ENCODE measurements at regions of chr5 and their contacts with region 1.

Region 1: DNA sequence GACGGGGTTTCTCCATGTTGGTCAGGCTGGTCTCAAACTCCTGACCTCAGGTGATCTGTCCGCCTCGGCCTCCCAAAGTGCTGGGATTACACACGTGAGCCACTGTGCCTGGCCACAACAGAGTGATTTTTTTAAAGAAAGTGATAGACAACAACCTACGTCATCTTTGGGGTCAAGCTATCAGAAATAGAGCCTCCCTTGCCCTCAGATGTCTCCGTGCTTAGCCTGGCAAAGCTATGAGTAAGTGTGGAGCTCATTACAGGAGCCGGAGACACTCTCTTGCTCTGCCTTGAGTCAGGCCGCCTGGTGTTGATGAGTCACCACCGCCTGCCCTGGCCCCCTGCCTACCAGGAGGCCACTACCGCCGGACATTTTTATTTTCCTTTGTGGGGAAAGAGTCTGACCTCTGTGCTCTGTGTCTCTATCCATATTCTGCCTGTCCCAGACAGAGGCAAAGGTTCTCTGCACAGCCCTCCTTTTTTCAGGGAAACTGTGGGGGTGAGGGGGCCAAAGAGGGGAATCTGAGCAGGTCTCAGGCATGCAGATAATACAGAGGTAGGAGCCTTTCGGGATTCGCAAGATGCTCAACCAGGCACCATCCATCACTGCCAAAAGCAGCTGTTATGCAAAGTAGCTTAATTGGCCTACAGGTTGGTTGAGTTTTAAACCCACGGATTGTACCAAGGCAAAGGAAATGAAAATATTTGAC is 123.7 kb upstream of the CPEB4 start:
- DNase-seq: peak; percentile 88

Region 2: DNA sequence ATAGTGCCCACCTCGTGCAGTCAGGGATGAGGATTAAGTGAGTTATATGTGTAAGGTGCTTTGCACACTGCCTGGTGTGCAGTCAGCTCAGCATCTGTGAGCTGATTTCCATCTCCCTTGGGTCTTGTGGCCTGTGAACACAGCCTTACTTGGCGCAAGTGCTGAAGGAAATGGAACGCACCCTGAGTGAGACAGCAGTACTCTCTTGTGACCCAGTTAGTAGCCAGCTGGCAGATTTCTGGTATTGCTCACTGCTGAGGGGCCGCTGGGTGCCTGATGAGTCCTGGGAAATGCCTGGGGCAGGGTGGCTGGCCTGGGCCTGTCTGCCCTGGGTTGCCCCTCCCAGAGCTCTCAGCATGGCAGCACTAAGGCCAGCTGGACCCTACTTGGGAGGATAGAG is 57.1 kb before region 1 on chr5:
- intact Hi-C with region 1: loop called (anchors 5 kb)
- DNase-seq: no peak

Region 3: DNA sequence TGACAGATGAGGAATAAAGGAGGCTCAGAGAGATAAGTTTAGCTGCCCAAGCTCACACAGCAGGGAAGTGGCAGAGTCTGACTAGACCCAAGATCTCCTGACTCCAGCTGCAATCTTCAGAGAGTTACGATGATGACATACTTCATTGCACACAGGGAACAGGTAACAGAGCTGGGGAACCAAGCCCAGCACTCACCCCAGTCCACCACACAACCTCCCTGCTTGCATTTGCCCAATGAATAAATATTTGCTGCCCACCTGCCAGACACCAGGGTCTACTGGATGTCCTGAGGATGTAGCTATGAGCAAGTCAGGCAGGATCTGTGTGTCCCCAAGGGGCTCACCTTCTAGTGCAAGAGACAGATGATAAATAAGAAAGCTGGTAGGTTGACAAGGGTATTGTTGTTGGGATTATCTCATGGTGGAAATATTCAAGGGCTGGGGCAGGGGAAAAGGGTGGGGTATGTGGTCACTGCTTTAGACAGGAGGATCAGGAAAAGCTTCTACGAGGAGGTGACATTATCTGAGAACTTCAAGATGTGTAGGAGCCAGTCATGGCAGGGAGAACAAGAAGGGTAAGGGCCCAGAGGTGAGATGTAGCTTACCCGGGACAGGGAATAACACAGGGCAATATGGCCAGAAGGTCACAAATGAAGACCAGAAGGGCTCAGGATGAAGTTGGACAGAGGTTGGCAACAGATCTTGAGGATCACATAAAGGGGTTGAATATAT is 95.1 kb after region 1 on chr5:
- intact Hi-C with region 1: loop called (anchors 5 kb)
- DNase-seq: no peak

Region 4: DNA sequence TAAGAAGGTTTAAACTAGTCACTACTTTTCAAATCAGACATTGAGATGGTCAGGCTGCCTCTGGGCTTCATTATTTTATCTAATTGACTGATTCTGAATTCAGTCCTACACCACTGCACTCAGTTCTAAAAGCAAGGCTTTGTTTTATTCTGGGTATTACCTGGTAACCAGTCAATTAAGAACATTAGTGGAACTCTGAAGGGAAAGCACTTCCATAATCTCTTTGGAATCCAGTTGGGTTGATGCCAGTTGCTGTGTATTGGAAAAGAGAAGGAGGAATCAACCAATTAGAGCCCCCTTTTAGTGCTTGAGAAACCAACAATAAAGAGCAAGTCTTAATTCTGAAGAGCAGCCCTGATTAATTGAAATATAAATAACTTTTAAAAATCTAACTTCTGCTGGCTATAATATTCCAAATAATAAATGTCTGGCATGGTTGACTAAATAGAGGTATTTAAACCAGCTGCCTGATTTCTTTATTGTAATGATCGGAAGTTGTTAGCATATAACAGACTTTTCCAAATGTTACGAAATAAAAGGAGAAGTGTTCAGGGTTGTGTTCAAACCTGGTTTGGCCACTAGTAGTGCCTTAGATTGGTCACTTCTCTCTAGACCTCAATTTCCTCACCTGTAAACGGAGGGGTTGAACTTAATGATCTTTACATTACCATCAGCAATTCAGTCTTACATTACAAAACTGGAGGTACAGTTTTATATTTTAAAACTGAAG is 155.7 kb after region 1 on chr5:
- intact Hi-C with region 1: loop called (anchors 5 kb)
- DNase-seq: no peak

Region 5: GRCh38 chr5:173941758-173942401 is 177.4 kb after region 1 on chr5:
- intact Hi-C with region 1: no loop called
- DNase-seq: no peak

Region 6: GRCh38 chr5:174520420-174521380 is 756.2 kb after region 1 on chr5:
- intact Hi-C with region 1: no loop called
- DNase-seq: no peak

Measured in cardiac septum (tissue), 1 donor.